Calu3 (cell line): ENCODE measurements at regions of chr6 and their contacts with region 1.

Region 1: DNA sequence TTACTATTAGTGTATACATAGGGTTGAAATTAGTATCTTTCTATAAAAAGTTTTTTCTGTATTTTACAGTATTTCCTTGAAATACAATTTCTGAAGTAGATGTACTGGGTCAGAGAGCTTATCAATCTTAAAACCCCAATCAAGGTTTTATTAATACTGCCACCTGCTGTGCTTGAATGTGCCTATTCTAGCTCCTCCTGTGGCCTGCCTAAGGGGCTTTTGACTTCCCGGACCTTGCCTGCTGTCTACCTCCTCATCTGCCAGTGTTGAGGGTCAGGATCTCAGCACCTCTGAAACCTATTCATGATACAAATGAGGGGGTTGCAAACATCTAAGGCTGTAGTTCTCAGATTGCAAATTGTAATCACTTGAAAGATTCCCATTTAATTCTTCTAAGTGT is 9.2 kb downstream of the PACRG start:
- DNase-seq: peak; percentile 16
- H3K4me3 Mint-ChIP-seq: no peak overlapping the region
- H3K27ac Mint-ChIP-seq: no peak overlapping the region
- H3K4me1 Mint-ChIP-seq: peaks cover 8% of the 10 kb centered on the region
- H3K27me3 Mint-ChIP-seq: no peaks in the 10 kb centered on the region
- CTCF ChIP-seq: no peak

Region 2: GRCh38 chr6:161618831-161619454 is 1118.0 kb before region 1 on chr6:
- CTCF ChIA-PET with region 1: no interaction called
- intact Hi-C with region 1: loop called (anchors 2 kb)
- DNase-seq: peak; percentile 38
- H3K4me3 Mint-ChIP-seq: no peak overlapping the region
- H3K27ac Mint-ChIP-seq: no peak overlapping the region
- H3K4me1 Mint-ChIP-seq: no peaks in the 10 kb centered on the region
- H3K27me3 Mint-ChIP-seq: no peaks in the 10 kb centered on the region
- CTCF ChIP-seq: peak; percentile 40

Region 3: GRCh38 chr6:161836643-161837448 is 900.1 kb before region 1 on chr6:
- CTCF ChIA-PET with region 1: no interaction called
- intact Hi-C with region 1: loop called (anchors 2 kb)
- DNase-seq: peak; percentile 8
- H3K4me3 Mint-ChIP-seq: no peak overlapping the region
- H3K27ac Mint-ChIP-seq: no peak overlapping the region
- H3K4me1 Mint-ChIP-seq: peaks cover 6% of the 10 kb centered on the region
- H3K27me3 Mint-ChIP-seq: no peaks in the 10 kb centered on the region
- CTCF ChIP-seq: no peak

Region 4: GRCh38 chr6:162525181-162525580 is 211.8 kb before region 1 on chr6:
- CTCF ChIA-PET with region 1: no interaction called
- intact Hi-C with region 1: no loop called
- DNase-seq: no peak
- H3K4me3 Mint-ChIP-seq: no peak overlapping the region
- H3K27ac Mint-ChIP-seq: no peak overlapping the region
- H3K4me1 Mint-ChIP-seq: no peaks in the 10 kb centered on the region
- H3K27me3 Mint-ChIP-seq: no peaks in the 10 kb centered on the region
- CTCF ChIP-seq: no peak

Region 5: DNA sequence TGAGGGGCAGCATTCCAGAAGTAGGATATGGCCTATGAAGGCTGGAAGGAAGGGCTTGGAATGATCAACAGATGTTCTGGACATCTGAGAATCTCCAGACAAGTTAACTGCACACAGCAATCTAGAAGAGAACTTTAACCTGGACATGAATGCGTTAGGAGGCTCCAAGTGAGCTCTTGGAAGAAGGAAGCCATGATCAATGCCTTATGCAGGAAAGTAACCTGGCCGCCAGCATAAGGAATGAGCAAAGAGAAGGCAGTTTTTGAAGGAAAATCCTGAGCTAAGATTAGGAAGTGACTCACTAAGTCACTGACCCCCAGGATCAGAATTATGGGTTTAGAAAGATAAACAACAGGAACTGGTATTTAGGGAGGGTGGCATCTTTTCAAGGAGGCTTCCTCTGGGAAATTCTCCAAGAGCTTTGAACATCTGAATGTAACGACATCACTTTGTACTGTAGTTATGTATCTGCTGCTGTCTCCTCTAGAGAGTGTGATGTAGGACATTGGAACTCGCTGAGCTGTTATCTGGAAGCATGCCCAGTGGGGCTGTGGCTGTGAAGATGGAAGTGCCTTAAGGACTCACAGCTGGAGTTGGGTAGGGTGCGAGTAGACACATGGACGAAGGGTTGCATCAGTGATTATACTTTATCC is 227.7 kb after region 1 on chr6:
- CTCF ChIA-PET with region 1: no interaction called
- intact Hi-C with region 1: no loop called
- DNase-seq: no peak
- H3K4me3 Mint-ChIP-seq: no peak overlapping the region
- H3K27ac Mint-ChIP-seq: no peak overlapping the region
- H3K4me1 Mint-ChIP-seq: no peaks in the 10 kb centered on the region
- H3K27me3 Mint-ChIP-seq: no peaks in the 10 kb centered on the region
- CTCF ChIP-seq: no peak